ENCODE measurements at regions of chr12 and their contacts with region 1.

Region 1: GRCh38 chr12:126772171-126772864 is 1494.7 kb upstream of the TMEM132C start:
- DNase-seq: peak; percentile 59 to 98
- H3K4me3 ChIP-seq: peak overlapping the region; percentile 74
- H3K27ac ChIP-seq: peak overlapping the region; percentile 82
- H3K4me1 ChIP-seq: 0 out of 2 replicates have a peak, but pooled peaks cover 8% of the 10 kb centered on the region
- H3K27me3 ChIP-seq: no peaks in the 10 kb centered on the region
- CTCF ChIP-seq: no peak

Region 2: GRCh38 chr12:125983093-125983783 is 789.1 kb before region 1 on chr12:
- CTCF ChIA-PET with region 1: no interaction called
- POLR2A ChIA-PET with region 1: no interaction called
- intact Hi-C with region 1: loop called (anchors 1 kb)
- DNase-seq: peak; percentile 72 to 85
- H3K4me3 ChIP-seq: peak overlapping the region; percentile 64
- H3K27ac ChIP-seq: peak overlapping the region; percentile 63
- H3K4me1 ChIP-seq: 0 out of 2 replicates have a peak, but pooled peaks cover 8% of the 10 kb centered on the region
- H3K27me3 ChIP-seq: no peaks in the 10 kb centered on the region
- CTCF ChIP-seq: no peak

Region 3: DNA sequence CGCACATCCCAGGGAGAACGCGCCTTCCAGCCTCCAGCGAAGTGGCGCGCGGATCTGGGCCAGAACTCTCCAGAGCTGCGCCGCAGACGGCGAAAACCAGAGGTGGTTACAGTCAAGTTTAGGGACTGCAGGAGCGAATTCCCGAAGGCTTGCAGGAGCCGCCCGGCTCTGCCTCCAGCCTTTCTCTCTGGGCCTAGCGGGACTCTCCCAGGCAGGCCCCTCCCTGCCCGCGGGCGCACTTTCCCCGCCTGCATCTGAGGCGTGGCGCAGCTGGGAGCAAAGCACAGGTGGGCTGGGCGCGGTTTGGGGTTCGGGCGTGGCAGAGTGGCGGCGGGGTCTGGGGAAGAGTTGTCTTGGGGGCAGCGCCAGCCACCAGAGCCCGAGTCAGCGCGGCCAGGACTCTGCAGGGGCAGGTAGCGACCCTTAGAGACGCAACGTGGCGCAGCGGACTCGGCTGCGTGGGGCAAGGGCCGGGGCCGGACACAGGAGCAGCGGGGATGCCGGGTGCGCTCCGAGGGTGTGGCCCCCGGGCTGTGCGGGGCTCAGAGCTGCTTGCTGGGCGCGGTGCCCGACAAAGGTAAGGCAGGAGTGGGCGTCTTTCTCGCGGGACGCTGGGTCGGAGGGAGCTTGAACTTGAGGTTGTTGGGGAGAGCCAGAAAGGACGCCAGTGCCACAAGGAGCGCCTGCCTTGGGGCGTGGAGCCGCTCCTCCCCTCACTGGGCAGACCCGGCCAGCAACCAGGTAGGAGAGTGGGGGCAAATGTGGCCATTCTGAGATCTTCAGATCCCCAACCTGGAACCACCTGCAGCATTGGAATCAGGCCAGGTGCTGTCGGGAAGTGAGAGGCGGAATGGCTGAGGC is 581.1 kb before region 1 on chr12:
- CTCF ChIA-PET with region 1: no interaction called
- POLR2A ChIA-PET with region 1: no interaction called
- intact Hi-C with region 1: loop called (anchors 1 kb)
- DNase-seq: peak in 1 of 2 experiments; percentile 57
- H3K4me3 ChIP-seq: no peak overlapping the region
- H3K27ac ChIP-seq: no peak overlapping the region
- H3K4me1 ChIP-seq: no peaks in the 10 kb centered on the region
- H3K27me3 ChIP-seq: peaks cover 13% of the 10 kb centered on the region; the same call in 1 of the 2 replicates
- CTCF ChIP-seq: no peak

Region 4: GRCh38 chr12:126493366-126494108 is 278.8 kb before region 1 on chr12:
- CTCF ChIA-PET with region 1: no interaction called
- POLR2A ChIA-PET with region 1: no interaction called
- intact Hi-C with region 1: loop called (anchors 5 kb)
- DNase-seq: peak; percentile 78 to 82
- H3K4me3 ChIP-seq: peak overlapping the region; percentile 31; the same call in 1 of the 2 replicates
- H3K27ac ChIP-seq: peak overlapping the region; percentile 95
- H3K4me1 ChIP-seq: peaks cover 15% of the 10 kb centered on the region
- H3K27me3 ChIP-seq: no peaks in the 10 kb centered on the region
- CTCF ChIP-seq: no peak

Region 5: DNA sequence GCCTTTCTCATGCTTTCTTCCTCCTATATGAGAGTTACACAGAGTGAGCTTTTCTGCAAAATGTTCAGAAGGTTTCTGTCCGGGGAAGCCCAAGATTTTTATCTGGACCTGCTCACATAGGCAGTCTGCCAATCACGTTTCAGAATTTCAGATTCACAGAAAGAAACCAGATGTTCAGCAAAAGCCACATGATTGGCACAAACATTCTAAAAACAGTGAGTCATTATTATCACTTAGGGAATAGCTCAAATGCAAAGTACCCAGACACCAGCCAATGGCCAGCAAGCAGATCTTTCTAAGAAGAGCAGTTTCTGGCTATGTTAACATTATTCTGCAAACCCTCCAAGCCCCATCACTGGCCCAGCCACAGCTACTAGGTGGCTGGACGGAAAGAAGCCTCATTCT is 63.8 kb before region 1 on chr12:
- CTCF ChIA-PET with region 1: no interaction called
- POLR2A ChIA-PET with region 1: no interaction called
- intact Hi-C with region 1: loop called (anchors 10 kb)
- DNase-seq: peak in 1 of 2 experiments; percentile 5
- H3K4me3 ChIP-seq: no peak overlapping the region
- H3K27ac ChIP-seq: no peak overlapping the region
- H3K4me1 ChIP-seq: no peaks in the 10 kb centered on the region
- H3K27me3 ChIP-seq: peaks cover 9% of the 10 kb centered on the region; the same call in 1 of the 2 replicates
- CTCF ChIP-seq: no peak

Region 6: GRCh38 chr12:126719912-126720705 is 52.2 kb before region 1 on chr12:
- CTCF ChIA-PET with region 1: no interaction called
- POLR2A ChIA-PET with region 1: no interaction called
- intact Hi-C with region 1: no loop called
- DNase-seq: no peak
- H3K4me3 ChIP-seq: no peak overlapping the region
- H3K27ac ChIP-seq: no peak overlapping the region
- H3K4me1 ChIP-seq: no peaks in the 10 kb centered on the region
- H3K27me3 ChIP-seq: peaks cover 15% of the 10 kb centered on the region; the same call in 1 of the 2 replicates
- CTCF ChIP-seq: no peak

Measured in PC-9 (cell line).